ENCODE measurements at regions of chr1 and their contacts with region 1.

Region 1: DNA sequence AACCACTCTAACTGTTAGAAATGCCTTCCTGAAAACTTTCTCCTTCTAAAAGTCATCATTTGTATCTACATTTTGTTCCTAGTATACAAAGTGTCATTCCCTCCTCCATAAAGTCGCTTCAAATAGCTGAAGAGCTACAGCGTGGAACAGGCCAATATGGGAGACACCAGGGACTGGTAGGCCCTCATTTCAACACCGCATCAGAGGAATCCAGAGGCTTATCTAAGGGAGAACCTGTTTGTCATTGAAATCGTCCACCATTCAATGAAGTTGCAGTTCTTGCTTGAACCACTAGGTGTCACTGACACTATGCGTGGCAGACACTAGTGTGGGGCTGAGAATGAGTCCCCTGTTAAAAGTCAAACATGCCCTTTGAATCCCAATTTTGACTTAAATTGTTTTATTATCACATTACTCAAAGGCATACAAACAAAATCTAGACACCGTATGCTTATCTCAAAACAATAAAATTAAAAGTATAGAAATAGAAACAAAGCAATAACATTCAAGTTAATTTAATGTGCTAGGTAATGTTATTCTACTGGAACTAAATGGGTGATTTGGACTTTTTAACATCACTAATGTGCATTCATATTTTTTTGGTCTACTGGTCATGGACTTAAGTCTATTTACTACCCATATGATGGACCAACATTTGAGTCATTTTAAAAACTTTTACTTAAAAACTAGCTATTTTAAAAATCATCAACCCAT is 182.3 kb downstream of the FCRL5 start:
- DNase-seq: peak in 1 of 2 donors; percentile 64
- ATAC-seq: peak; percentile 83 to 89 (median 88)
- H3K4me3 ChIP-seq: no peak overlapping the region
- H3K4me3 Mint-ChIP-seq: no peak overlapping the region
- H3K27ac ChIP-seq: no peak overlapping the region
- H3K27ac Mint-ChIP-seq: no peak overlapping the region
- H3K4me1 ChIP-seq: no peaks in the 10 kb centered on the region
- H3K4me1 Mint-ChIP-seq: no peaks in the 10 kb centered on the region
- H3K27me3 ChIP-seq: no peaks in the 10 kb centered on the region
- H3K27me3 Mint-ChIP-seq: peaks cover 0 to 8% of the 10 kb centered on the region in 2 donors
- CTCF ChIP-seq: peak; percentile 94

Region 2: DNA sequence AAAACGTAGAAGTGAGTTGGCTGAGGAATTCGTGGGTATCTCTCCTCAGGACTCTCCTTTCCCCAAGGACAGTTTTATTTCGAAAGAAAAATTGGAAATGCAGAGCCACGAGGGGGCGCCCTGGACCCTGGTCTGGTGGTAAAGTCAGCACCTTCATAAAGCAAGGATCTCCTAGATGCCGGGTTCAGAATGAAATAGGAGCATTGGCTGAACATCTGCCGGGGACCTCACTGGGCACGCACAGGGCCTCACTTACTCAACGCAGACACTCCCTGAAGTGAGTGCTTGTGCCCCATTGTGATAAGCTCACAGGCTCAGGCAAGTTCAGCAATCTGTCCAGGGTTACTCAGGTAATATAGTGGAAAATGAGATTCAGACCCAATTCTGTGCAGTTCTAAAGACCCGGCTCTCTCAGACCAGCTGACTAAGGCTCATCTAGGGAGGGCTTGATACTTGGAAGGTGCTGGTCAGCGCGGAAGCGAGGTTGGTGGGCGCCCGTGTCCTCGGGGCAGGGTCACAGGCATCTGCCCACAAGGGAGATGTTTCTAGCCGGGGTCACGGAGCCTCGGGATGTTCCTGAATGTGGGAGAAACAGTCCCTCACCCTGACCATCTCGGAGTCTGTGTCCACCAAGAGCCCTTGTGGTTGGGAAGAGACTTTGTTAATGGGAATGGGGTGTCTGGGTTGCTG is 176.1 kb before region 1 on chr1:
- intact Hi-C with region 1: loop called (anchors 10 kb)
- DNase-seq: peak; percentile 49 to 51
- ATAC-seq: peak in 1 of 3 donors; percentile 41
- H3K4me3 ChIP-seq: no peak overlapping the region
- H3K4me3 Mint-ChIP-seq: no peak overlapping the region
- H3K27ac ChIP-seq: no peak overlapping the region
- H3K27ac Mint-ChIP-seq: no peak overlapping the region
- H3K4me1 ChIP-seq: no peaks in the 10 kb centered on the region
- H3K4me1 Mint-ChIP-seq: peaks cover 5 to 13% of the 10 kb centered on the region in 2 donors
- H3K27me3 ChIP-seq: no peaks in the 10 kb centered on the region
- H3K27me3 Mint-ChIP-seq: peaks cover 35 to 48% of the 10 kb centered on the region in 2 donors
- CTCF ChIP-seq: peak; percentile 71

Region 3: DNA sequence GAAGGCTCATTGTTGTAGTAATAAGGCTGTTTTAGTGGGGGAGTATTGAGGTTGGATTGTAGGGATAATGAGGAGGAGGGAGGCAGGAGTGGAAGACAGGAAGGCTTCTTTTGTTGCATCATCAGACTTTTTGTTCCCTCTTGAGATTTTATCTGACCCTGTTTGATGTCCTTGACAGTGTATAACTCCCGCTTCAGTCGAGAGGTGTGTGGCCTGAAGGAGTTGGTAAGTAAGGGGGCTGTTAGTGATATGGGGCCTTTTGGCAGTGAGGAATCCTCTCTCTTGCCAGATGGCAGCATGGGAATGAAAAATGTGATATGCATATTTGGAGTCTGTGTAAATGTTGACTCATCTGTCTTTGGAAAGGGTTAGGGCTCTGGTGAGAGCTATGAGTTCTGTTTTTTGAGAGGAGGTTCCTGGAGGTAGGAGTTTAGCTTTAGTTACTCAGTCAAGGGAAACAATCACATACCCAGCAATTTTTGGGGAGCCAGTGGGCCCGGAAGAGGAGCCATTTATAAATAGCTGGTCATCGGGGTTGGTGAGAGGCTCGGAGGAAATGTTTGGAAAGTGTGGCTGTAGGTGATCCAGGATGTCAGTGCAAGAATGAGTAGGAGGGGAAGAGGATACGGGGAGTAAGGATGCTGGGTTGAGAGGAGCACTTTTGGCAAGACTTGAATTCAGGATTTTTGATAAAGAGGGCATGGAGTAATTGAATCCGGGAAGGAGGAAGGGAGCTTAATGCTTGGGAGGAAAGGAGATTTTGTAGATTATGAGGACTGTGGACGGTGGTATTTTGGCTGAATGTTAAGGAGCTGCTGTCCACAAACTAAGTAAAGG is 95.0 kb before region 1 on chr1:
- intact Hi-C with region 1: no loop called
- DNase-seq: no peak
- ATAC-seq: no peak
- H3K4me3 ChIP-seq: no peak overlapping the region
- H3K4me3 Mint-ChIP-seq: no peak overlapping the region
- H3K27ac ChIP-seq: no peak overlapping the region
- H3K27ac Mint-ChIP-seq: no peak overlapping the region
- H3K4me1 ChIP-seq: peaks cover 10% of the 10 kb centered on the region
- H3K4me1 Mint-ChIP-seq: peaks cover 0 to 4% of the 10 kb centered on the region in 2 donors
- H3K27me3 ChIP-seq: no peaks in the 10 kb centered on the region
- H3K27me3 Mint-ChIP-seq: peaks cover 0 to 4% of the 10 kb centered on the region in 2 donors
- CTCF ChIP-seq: no peak

Measured in natural killer cell (primary cell).